Activated T-helper 1 cell treated with anti-CD3 and anti-CD28 coated beads, Interleukin-12 subunit alpha, Interleukin-12 subunit beta, Interleukin-2, Interleukin-4 antibody, amounts not matched to agents 30 ng/mL and 10 ng/mL and 1 ng/mL, durations not matched to agents 14 hours and 24 hours and 36 hours (primary cell): ENCODE measurements at regions of chr3 and their contacts with region 1.

Region 1: DNA sequence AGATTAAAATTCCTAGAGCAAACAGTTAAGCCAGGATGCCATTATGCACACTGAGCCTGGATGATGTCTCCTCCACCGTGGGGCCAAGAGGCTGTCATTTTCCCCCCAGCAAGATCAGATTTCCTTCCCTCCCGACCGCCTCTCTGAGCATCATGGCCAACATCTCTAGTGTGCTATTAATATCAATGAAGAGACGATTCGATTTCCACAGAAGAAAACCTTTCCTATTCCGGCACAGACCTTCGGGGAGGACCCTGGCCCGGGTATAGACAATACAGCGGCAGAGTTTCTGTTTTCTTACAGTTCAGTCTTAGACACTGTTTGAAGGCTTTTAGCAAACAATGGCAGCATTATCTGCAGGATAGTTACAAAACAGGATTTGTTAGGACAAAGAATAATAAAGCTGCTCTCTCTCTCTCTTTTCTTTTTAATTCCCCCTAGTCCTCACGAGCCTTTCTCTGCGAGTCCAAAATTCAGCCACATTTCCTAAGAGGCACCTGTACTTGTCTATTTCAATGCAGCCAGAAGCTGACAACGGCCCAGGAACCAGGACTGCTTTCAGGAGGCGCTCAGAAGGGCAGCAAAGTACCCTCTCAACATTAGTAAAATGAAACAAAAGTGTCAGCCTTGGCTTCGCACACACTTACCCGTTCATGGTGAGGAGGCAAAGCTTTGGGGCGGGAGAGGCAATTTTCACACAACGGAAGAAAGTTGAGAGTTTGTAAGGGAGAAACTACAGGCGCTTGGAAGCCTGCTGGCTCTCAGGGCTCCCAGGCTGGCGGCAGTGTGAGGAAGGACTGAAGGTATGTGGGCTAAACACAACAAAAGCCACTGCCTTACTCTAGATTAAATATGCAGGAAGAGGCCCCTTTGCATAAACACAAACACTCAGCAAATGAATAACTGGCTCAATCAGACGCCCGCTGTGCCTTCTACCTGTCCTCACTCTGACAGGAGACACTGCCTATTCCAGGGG is 278.0 kb downstream of the FOXP1 start:
- DNase-seq: no peak
- H3K4me3 Mint-ChIP-seq: peak overlapping the region; percentile 87
- H3K27ac Mint-ChIP-seq: peak overlapping the region; percentile 63
- H3K4me1 Mint-ChIP-seq: peaks cover 79% of the 10 kb centered on the region
- H3K27me3 Mint-ChIP-seq: peaks cover 53% of the 10 kb centered on the region

Region 2: DNA sequence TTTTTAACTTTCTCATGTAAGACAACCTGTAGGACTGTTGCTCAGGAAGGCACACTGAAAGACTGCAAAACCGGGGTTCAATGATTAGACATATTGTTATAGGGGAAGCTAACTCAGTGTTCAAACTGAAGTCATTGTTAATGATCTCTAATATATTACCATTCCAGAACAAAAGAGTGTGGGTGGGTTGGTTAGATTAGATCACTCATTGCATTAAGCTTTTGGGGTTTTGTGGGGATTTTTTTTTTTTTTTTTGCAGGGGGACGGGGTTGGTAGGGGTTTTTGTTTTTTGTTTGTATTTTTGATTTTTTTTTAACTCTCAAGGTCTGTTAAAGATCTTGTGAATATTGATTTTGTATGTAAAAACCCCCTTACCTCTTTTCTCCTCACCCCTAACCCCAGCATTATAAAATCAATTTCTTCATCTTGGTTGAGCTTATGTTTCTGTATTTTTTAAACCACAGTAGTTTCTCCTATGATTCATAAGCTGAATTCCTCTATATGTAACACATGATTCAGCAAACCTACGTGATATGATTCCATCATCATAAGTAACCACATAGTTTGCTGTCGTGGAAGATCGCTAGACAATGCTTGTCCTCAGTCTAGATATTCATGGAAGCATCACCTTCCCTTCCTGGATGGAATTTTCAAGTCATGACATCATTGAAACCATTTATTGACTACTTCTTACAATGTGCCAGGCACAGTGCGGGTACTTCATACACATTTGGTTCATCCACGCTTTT is 448.9 kb before region 1 on chr3:
- intact Hi-C with region 1: loop called (anchors 1 kb)
- DNase-seq: no peak
- H3K4me3 Mint-ChIP-seq: no peak overlapping the region
- H3K27ac Mint-ChIP-seq: peak overlapping the region; percentile 49
- H3K4me1 Mint-ChIP-seq: peaks cover 22% of the 10 kb centered on the region
- H3K27me3 Mint-ChIP-seq: peaks cover 6% of the 10 kb centered on the region

Region 3: DNA sequence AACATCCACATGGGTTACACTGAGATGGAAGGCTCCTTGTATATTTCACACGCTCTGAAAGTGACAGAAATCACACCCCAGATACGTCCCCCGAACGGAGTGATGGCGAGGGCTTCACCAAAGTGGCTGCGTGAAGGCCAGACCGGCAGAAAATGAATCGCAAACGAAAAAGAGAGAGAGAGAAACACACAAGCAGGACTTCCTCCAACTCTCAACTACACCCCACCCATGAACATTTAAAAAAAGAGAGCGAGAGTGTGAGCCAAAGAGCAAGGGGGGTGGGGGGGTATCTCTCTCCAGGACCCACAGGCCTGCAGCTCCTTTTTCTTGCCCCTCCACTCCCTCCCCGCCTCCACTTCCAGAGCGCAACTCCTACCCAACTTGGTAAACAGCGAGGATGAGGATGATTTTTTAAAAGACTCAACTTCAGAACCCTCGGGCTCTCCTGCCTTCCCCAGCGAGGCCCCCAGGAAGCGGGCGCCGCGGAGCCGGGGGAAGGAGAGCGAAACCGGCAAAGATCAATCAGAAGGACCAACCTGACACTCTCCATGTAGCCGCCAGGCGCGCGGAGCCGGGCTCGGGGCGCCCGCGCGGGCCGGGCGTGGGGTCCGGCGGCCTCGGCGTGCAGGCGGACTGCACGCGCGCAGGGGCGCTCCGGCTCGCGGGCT is 241.1 kb before region 1 on chr3:
- intact Hi-C with region 1: loop called (anchors 1 kb)
- DNase-seq: peak; percentile 59
- H3K4me3 Mint-ChIP-seq: no peak overlapping the region
- H3K27ac Mint-ChIP-seq: no peak overlapping the region
- H3K4me1 Mint-ChIP-seq: peaks cover 39% of the 10 kb centered on the region
- H3K27me3 Mint-ChIP-seq: no peaks in the 10 kb centered on the region

Region 4: DNA sequence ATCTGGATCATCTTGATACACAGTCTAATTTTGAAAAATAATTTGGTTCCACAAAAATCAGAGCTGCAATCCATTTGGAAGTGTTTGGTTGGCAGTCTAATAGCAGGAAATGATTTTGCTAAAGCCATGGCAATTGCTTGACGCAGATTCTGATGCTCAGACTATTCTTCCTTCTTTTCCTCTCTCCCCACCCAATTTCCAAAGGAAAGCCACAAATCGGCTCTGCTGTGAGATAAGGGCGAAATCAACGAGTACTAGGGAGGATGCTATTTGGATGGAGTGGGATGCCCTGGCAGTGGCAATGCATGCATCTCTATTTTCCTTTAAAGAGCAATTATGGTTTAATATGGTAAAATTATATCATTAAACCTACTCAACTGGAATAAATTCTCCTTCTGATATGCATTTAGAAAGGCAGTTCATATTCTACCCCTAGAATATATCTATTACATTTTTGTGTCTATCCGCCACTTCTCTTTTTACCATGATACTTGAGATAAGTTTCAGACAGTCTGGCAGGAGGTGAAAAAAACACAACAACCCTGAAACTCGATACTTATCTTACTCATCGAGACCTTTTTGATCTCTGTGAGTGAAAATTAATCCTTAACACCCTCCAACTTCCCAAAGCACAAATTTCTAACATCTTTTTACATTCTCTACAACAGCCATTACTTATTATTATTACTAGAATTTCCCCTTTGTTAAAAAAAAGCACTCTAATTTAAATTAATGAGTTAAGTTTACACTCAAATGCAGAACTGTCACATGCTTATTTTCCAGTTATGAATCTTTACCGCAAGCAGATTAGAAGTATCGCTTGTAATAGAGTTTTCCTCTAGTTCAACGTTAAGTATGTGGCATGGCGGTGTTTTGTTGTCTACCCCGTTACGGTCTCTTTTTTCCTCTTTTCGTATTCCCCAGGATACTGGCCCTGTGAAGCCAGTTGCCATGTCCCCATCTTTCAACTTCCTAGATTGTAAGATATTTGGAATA is 155.3 kb before region 1 on chr3:
- intact Hi-C with region 1: loop called (anchors 1 kb)
- DNase-seq: no peak
- H3K4me3 Mint-ChIP-seq: no peak overlapping the region
- H3K27ac Mint-ChIP-seq: peak overlapping the region; percentile 57
- H3K4me1 Mint-ChIP-seq: peaks cover 13% of the 10 kb centered on the region
- H3K27me3 Mint-ChIP-seq: peaks cover 28% of the 10 kb centered on the region

Region 5: DNA sequence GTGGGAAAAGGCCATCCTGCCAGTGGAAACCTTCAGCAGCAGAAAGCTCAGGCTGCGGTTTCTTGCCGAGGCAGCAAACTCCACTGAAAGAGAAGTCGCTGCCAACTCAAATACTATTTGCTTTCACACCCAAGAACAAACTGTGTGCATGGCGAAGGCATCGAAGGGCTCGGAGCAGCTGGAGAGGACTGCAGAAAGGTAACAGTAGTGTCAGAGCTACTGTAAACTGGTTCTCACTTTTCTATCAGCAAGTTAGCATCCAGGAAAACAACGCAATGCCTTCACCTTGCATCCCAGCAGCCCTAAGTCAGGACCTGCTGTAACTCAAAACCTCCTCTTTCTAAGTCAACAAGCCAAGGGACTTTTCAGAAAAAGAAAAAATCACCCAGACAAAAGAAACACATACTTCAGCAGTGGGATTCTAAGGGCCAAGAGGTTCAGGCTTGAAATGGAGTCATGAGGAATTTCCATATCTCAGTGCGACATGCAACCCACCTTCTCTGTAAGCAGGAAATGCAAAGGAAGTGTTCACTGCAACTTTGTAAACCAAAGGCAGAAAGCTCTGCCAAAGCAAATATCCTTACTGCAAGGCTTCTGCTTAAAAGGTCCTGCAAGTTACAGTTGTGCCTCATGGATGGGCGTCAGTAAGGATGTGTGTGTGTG is 84.5 kb after region 1 on chr3:
- intact Hi-C with region 1: loop called (anchors 1 kb)
- DNase-seq: no peak
- H3K4me3 Mint-ChIP-seq: peak overlapping the region; percentile 10
- H3K27ac Mint-ChIP-seq: peak overlapping the region; percentile 27
- H3K4me1 Mint-ChIP-seq: peaks cover 33% of the 10 kb centered on the region
- H3K27me3 Mint-ChIP-seq: peaks cover 18% of the 10 kb centered on the region

Region 6: GRCh38 chr3:71444028-71444860 is 138.7 kb after region 1 on chr3:
- intact Hi-C with region 1: loop called (anchors 5 kb)
- DNase-seq: peak; percentile 71
- H3K4me3 Mint-ChIP-seq: peak overlapping the region; percentile 74
- H3K27ac Mint-ChIP-seq: peak overlapping the region; percentile 95
- H3K4me1 Mint-ChIP-seq: peaks cover 73% of the 10 kb centered on the region
- H3K27me3 Mint-ChIP-seq: peaks cover 8% of the 10 kb centered on the region

Region 7: DNA sequence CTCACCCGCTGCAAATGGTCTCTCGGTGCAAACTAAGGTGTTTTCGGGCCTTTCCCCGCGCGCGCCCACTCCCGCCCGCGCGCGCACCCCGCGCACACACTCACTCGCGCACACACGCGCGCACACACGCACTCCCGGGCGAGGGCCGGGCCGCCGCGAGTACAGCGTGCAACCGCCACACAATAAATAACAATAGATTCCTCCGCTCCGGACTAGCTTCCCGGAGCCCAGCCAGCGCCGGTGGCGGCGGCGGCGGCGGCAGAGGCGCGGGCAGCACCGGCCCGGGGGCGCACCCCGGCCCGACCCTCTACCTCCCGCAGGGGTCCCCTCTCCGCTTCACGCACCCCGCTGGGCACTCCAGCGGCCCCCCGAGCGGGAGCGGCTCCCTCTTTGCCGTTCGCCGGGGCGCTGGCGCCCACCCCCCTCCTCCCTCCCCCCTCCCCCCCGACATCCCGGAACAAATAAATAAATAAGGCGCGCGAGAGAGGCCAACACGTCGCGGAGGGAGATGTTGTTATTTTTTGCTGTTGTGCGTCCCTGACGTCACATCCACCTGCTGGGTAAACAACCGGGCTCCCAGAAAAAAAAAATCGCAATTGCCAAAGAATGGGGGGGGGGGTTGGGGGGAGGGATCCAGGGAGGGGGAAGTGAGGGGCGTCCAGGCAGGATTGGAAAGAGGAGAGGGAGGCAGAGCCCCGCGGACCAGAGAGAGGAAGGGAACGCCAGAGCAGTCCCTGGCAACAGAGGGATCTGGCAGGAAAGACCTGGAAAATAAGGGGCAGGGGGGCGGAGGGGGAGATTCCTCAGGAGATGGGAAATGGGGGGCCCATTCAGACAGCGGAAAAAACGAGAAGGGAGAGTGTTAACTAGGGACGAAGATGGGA is 278.3 kb after region 1 on chr3 and contains the start of gene FOXP1:
- intact Hi-C with region 1: loop called (anchors 1 kb)
- DNase-seq: peak; percentile 37
- H3K4me3 Mint-ChIP-seq: peak within 1 kb of the TSS; percentile 90
- H3K27ac Mint-ChIP-seq: peak within 1 kb of the TSS; percentile 93
- H3K4me1 Mint-ChIP-seq: peaks cover 47% of the 10 kb centered on the region
- H3K27me3 Mint-ChIP-seq: peaks cover 31% of the 10 kb centered on the region
- total RNA-seq, gene FOXP1: 94.8 and 97.6 TPM in 2 replicates